Lower leg skin (tissue), 4 donors: ENCODE measurements at regions of chr4 and their contacts with region 1.

Region 1: GRCh38 chr4:7802093-7802726 is 137.5 kb downstream of the AFAP1 start:
- DNase-seq: peak; percentile 74 to 95
- H3K4me3 ChIP-seq: no peak overlapping the region
- CTCF ChIP-seq: peak in 1 of 3 donors; percentile 74
- POLR2A ChIP-seq: no peak

Region 2: DNA sequence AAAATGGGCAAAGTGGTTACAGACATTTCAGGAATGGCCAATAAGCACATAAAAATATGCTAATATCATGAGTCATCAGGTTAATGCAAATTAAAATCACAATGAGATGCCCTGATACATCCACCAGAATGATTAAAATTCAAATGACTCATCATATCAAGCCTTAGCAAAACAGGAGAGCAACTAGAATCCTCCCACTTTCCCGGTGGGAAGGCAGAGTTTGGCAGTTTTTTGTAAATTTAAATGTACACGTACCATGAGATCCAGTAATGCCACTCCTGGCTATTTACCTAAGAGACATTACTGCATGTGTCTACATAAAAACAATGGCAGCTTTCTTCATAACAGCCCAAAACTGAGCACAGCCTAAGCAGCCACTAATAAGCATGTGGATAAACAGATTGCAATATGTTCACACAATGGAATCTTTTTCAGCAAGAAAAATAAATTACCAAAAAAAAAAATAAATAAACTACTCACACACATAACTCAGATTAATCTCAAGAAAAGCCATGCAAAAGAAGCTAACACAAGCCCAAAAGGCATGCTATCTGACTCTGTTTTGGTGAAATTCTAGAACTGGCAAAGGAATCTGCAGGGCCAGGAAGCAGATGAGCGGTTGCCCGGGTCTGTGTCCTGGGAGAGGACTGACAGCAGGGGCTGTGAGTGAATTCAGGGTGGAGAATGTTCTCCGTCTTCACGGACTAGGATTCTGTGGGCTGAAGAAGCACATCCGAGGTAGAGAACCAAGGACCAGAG is 88.6 kb after region 1 on chr4:
- intact Hi-C with region 1: no loop called
- DNase-seq: peak in 1 of 2 donors; percentile 79
- H3K4me3 ChIP-seq: no peak overlapping the region
- CTCF ChIP-seq: no peak
- POLR2A ChIP-seq: no peak

Region 3: DNA sequence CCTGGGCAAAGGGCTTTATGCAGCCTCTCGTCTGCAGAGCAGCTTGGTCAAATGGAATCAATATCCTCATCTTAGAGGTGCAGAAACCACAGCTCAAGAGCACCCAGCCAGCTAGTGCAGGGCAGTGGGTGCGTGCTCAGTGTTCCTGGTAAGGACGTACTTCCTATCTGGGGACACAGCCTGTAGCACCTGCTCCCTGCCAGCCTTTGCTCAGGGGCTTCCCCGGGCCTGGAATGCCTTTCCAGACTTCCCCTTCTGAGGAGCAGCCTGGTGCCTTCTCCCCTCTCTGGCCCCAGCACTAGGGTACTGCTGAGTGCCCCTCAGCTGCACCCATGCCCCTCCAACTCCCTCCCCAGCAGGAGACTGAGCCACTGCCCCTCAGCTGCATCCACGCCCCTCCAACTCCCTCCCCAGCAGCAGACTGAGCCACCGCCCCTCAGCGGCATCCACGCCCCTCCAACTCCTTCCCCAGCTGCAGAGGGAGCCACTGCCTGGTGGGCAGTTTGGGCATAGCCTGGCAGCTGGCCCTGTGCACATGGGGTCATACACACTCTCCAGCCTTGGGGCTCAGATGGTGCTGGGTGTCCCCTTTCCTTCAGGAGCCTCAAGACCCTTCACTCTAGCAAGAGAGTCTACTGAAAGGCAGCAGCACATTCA is 179.7 kb after region 1 on chr4:
- intact Hi-C with region 1: loop called (anchors 2 kb)
- DNase-seq: no peak
- H3K4me3 ChIP-seq: no peak overlapping the region
- CTCF ChIP-seq: no peak
- POLR2A ChIP-seq: no peak